ENCODE measurements at regions of chr14 and their contacts with region 1.

Region 1: GRCh38 chr14:68780358-68781160 is 12.3 kb downstream of the ZFP36L1 start:
- DNase-seq: peak; percentile 48
- H3K4me3 Mint-ChIP-seq: peak overlapping the region; percentile 61
- H3K27ac Mint-ChIP-seq: peak overlapping the region; percentile 62
- H3K4me1 Mint-ChIP-seq: peaks cover 72% of the 10 kb centered on the region
- H3K27me3 Mint-ChIP-seq: no peaks in the 10 kb centered on the region

Region 2: DNA sequence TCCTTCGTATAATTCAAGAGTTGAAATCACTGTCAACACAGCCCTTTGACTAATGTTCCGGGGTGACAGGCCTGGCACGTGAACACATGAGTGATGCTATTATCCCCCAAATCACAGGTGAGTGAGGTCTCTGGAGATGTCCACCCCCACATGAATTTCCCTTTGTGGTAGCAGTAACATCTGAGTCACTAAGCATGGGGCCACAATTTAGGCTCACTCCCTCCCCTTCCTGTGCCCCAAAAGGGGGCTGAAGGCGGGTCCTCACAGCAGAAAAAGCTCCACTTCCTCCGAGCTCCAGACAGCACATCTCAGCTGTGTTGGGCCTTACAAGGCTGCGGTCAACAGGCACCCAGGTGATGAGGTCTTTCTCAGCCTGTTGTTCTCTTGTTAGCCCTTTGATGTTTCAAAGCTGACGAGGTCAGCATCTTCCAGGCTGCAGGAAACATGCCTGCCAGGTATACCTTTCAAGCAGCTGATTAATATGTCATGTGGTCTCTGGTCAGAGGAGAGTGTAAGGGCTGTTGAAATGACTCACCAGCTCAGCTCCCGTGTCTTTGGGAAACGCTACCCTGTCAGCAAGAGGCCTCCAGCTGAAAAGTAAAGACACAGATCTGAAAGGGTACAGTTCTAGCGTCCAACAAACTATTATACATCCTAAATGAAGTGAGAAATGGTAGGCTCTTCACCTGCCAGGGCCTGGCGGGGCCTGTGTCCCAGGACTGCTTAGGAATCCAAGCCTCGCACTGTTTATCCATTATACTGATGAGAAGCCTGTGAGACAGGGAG is 94.9 kb before region 1 on chr14:
- CTCF ChIA-PET with region 1: interaction called, 3 read pairs
- intact Hi-C with region 1: loop called (anchors 1 kb)
- DNase-seq: peak; percentile 90
- H3K4me3 Mint-ChIP-seq: peak overlapping the region; percentile 19
- H3K27ac Mint-ChIP-seq: peak overlapping the region; percentile 91
- H3K4me1 Mint-ChIP-seq: peaks cover 54% of the 10 kb centered on the region
- H3K27me3 Mint-ChIP-seq: no peaks in the 10 kb centered on the region

Region 3: DNA sequence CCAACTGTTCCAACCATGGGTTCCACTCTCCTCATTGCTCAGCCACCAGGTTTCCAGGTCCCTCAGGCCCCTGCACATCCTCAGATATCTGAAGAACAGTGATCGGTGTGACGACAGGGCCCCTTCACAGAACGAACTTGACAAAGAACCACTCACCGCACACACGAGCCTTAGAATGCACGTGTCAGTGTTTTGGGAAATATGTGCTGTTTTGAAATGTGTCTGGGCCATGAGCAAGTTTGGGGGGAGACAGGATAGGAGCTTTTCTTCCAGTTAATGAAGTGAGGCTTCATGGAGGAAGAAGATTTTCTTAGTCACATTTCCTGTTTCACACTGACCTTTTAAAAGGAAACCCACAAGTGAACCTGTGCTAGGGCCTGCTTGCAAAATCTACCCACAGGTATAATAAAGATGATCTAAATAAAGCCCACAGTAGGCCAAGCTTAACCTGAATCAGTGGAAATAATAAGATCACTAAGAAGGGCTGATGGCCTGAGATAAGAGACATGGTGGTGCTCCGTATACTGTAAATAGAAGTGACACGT is 46.3 kb before region 1 on chr14:
- CTCF ChIA-PET with region 1: interaction called, 3 read pairs
- intact Hi-C with region 1: loop called (anchors 1 kb)
- DNase-seq: peak; percentile 56
- H3K4me3 Mint-ChIP-seq: no peak overlapping the region
- H3K27ac Mint-ChIP-seq: peak overlapping the region; percentile 55
- H3K4me1 Mint-ChIP-seq: peaks cover 26% of the 10 kb centered on the region
- H3K27me3 Mint-ChIP-seq: no peaks in the 10 kb centered on the region

Region 4: DNA sequence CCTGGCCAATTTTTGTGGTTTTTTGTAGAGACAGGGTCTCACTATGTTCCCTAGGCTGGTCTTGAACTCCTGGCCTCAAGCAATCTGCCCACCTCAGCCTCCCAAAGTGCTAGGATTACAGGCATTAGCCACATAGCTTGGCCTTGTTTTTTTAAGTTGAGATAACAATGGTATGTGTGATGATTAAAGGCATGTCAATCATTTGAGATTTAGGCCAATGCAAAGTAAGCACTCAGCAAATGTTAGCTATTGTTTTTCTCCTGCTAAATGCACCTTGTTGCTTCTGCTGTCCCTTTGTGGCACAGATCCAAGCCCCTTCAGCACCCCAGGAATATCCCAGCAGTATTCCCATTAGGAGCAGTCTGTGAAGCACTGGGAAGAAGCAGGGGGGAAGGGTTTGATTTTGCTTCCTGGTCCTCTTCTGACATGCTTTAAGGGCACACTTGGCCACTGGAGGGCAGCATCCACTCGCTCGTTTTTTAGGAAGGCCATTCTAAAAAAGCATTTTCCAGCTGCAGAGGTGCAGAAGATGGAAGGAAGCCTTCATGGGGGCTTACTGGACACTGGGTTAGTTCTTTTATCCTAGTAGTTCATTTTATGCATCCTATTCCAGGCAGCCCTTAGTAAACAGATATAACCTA is 82.5 kb after region 1 on chr14:
- CTCF ChIA-PET with region 1: no interaction called
- intact Hi-C with region 1: no loop called
- DNase-seq: peak; percentile 92
- H3K4me3 Mint-ChIP-seq: no peak overlapping the region
- H3K27ac Mint-ChIP-seq: no peak overlapping the region
- H3K4me1 Mint-ChIP-seq: no peaks in the 10 kb centered on the region
- H3K27me3 Mint-ChIP-seq: no peaks in the 10 kb centered on the region

Region 5: GRCh38 chr14:69093631-69094421 is 313.3 kb after region 1 on chr14:
- CTCF ChIA-PET with region 1: no interaction called
- intact Hi-C with region 1: no loop called
- DNase-seq: no peak
- H3K4me3 Mint-ChIP-seq: no peak overlapping the region
- H3K27ac Mint-ChIP-seq: peak overlapping the region; percentile 3
- H3K4me1 Mint-ChIP-seq: peaks cover 16% of the 10 kb centered on the region
- H3K27me3 Mint-ChIP-seq: no peaks in the 10 kb centered on the region